HCT116 (cell line): ENCODE measurements at regions of chr11 and their contacts with region 1.

Region 1: DNA sequence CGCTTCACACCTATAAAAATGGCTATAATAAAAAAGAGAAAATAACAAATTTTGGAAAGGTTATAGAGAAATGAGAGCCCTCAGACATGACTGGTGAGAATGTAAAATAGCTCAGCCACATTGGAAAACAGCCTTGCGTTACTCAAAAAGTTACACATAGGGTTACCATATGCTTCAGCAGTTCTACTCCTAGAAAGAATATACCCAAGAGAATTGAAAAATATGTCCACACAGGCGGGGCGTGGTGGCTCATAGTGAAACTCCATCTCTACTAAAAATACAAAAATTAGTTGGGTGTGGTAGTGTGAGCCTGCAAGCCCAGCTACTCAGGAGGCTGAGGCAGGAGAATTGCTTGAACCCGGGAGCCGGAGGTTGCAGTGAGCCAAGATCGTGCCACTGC is 7.6 kb upstream of the JHY start:
- DNase-seq: no peak
- ATAC-seq: no peak
- H3K4me3 ChIP-seq: no peak overlapping the region
- H3K27ac ChIP-seq: no peak overlapping the region
- H3K4me1 ChIP-seq: no peaks in the 10 kb centered on the region
- H3K27me3 ChIP-seq: no peaks in the 10 kb centered on the region
- CTCF ChIP-seq: no peak
- POLR2A ChIP-seq: no peak
- RAD21 ChIP-seq: no peak

Region 2: GRCh38 chr11:122863704-122864326 is 11.2 kb before region 1 on chr11:
- CTCF ChIA-PET with region 1: interaction called, 23 read pairs
- POLR2A ChIA-PET with region 1: no interaction called
- RAD21 ChIA-PET with region 1: interaction called in 1 of 2 experiments, 4 read pairs
- intact Hi-C with region 1: no loop called
- DNase-seq: peak; percentile 37
- ATAC-seq: peak; percentile 58; the same call in 1 of the 2 replicates
- H3K4me3 ChIP-seq: no peak overlapping the region
- H3K27ac ChIP-seq: no peak overlapping the region
- H3K4me1 ChIP-seq: peaks cover 0 to 3% of the 10 kb centered on the region in 2 experiments; a peak in 2 of 4 replicates
- H3K27me3 ChIP-seq: peaks cover 4% of the 10 kb centered on the region; the same call in 1 of the 2 replicates
- CTCF ChIP-seq: peak; percentile 88 to 91 (median 88)
- POLR2A ChIP-seq: no peak
- RAD21 ChIP-seq: peak; percentile 83

Region 3: DNA sequence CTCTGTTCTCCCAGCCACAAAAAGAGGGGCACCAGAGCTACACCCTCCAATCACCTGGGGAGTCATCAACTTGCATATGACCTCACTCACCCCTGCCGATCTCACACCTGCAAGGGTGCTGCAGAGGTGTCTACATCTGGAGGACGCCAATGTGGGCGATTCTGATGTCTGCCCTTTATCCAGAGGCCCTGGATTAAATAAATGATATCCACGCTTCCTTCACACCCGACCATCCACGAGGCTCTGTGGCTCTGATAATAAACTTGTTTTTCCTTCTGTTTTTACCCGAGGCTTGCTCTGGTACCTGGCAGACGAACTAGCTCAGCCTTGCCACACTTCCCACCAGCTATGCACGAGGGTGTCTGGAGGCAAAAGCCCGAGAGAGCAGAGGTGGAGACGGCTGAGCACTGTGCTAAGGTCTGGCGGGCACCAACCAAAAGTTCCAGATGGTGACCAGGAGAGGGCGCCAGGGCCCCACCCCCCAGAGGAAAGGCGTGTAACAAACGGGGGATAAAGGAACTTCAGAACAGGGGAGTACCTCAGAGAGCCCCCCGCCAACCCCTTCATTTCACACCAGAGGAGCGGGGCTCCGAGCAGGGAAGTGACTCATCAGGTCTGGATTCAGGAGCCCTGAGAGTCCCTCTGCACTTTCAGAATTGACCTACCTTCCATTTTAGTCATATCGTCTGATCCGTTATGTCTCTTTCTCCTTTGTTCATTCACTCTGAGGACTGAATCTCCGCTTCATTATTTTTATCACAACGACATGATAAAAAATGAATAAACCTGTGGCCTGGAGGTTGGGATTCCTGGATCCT is 765.9 kb after region 1 on chr11:
- CTCF ChIA-PET with region 1: no interaction called
- POLR2A ChIA-PET with region 1: no interaction called
- RAD21 ChIA-PET with region 1: no interaction called
- intact Hi-C with region 1: no loop called
- DNase-seq: no peak
- ATAC-seq: peak; percentile 98
- H3K4me3 ChIP-seq: no peak overlapping the region
- H3K27ac ChIP-seq: no peak overlapping the region
- H3K4me1 ChIP-seq: peaks cover 0 to 5% of the 10 kb centered on the region in 2 experiments; a peak in 1 of 4 replicates
- H3K27me3 ChIP-seq: peaks cover 25% of the 10 kb centered on the region
- CTCF ChIP-seq: peak; percentile 79 to 92 (median 89); a peak in 5 of 6 replicates
- POLR2A ChIP-seq: no peak
- RAD21 ChIP-seq: peak; percentile 89